Aorta (tissue), 5 donors: ENCODE measurements at regions of chr7 and their contacts with region 1.

Region 1: DNA sequence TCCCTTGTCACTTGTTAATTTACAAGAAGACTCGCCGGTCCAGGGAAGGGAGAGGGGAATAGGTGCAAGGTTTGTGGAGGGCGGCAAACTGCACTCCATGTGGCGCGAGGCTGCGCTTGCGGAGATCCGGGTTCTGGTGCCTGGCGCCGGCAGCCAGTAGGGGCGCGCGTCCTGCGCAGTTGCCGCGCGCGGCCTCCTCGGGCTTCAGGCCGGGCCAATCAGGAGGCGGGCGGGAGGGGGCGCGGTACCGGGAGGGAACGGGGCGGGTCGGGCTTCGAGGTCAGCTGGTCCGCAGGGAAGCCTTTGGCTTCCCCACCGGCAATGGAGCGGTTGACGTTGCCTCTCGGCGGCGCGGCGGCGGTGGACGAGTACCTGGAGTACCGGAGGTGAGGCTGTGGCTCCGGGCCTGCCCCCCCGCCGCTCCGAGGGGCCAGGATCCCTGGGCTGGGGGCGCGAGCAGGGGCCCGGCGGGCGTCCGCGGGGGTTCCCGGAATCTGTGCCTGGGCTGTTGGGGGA is at the start of gene FAM221A:
- DNase-seq: peak; percentile 94 to 97
- ATAC-seq: peak; percentile 99
- H3K4me3 ChIP-seq: peak within 1 kb of the TSS; percentile 73 to 85
- H3K27ac ChIP-seq: peak within 1 kb of the TSS in 1 of 2 donors; percentile 29
- H3K4me1 ChIP-seq: no peaks in the 10 kb centered on the region
- H3K27me3 ChIP-seq: no peaks in the 10 kb centered on the region
- total RNA-seq, gene FAM221A: 8.5 to 8.7 TPM

Region 2: DNA sequence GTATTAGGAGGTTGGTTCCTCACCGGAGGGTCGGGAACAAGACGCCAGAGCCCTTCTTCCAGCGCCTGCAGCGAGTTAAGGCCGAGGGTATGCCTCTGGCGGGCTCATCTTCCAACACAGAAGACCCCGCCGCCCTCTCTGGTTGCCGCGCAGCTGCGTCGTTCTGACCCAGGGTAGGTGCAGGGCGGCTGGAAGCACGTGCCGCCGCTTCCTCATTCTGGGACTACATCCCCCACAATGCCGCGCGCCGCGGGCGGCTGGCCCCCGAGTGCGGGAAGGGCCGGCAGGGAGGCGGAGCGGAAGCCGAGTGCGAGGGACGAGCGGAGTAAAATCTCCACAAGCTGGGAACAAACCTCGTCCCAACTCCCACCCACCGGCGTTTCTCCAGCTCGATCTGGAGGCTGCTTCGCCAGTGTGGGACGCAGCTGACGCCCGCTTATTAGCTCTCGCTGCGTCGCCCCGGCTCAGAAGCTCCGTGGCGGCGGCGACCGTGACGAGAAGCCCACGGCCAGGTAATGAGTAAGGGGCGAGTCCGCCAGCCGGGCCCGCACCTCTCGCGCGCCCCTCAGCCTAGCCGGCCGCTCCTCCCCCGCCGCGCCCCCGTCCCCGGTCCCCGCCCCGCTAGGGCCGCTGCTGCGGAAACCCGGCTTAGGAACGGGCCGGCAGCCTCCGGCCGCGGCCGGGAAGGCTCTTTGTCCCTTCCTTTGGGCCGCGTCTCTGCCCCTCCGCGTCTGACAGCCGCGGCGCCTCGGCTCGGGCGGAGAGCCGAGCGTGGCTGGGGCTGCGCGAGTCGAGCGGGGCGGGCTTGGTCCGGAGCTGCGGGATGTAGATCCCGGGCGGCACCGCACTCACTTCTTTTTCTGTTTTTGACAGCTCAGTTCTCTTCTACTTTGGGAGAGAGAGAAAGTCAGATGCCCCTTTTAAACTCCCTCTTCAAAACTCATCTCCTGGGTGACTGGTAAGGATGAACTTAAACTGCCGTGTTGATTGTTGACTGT is 82.6 kb before region 1 on chr7 and contains the start of gene CCDC126:
- intact Hi-C with region 1: loop called (anchors 5 kb)
- DNase-seq: peak; percentile 96 to 98
- ATAC-seq: peak; percentile 98
- H3K4me3 ChIP-seq: peak within 1 kb of the TSS; percentile 93 to 96
- H3K27ac ChIP-seq: peak within 1 kb of the TSS; percentile 94 to 97
- H3K4me1 ChIP-seq: peaks cover 0 to 8% of the 10 kb centered on the region in 2 donors
- H3K27me3 ChIP-seq: no peaks in the 10 kb centered on the region
- total RNA-seq, gene CCDC126: 10.8 to 14.7 TPM